PC-3 (cell line): ENCODE measurements at regions of chr22 and their contacts with region 1.

Region 1: DNA sequence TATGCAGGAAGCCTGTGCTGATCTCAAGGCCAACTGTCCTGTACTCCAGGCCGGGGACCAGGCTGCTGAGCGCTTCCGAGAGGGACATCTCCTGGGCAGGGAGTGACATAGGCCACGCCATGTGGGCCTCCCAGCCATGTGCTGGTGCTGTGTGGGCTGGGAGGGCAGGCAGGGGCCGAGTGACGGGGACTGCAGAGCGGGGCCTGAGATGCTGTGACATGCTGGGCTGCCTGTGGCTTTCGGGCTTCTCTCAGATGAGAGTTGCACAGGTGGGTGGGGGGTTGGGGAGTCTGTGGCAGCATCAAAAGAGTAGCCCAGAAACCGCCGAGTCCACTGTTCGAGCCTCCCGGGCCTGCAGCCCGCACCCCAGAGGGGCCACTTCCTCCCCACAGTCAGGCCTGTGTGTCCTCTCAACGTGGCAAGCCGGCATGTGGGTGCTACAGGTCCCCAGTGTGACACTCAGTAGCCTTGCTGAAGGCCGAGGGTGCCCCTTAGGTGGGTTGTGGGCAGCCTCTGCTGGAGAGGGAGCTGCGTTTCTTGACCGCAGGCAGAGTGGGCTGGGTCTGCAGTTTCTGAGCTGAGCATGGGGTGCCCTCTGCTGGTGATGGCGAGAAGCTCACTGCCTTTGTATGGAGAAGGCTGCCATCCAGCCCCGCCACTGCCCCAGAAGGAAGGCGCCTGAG is 101.2 kb downstream of the BCR start:
- DNase-seq: peak; percentile 76
- ATAC-seq: peak; percentile 70
- H3K4me3 ChIP-seq: peak overlapping the region; percentile 54; the same call in 1 of the 2 replicates
- H3K27ac ChIP-seq: peak overlapping the region; percentile 81
- H3K4me1 ChIP-seq: peaks cover 22% of the 10 kb centered on the region
- H3K27me3 ChIP-seq: no peaks in the 10 kb centered on the region
- CTCF ChIP-seq: peak; percentile 82

Region 2: GRCh38 chr22:23225724-23226496 is 55.6 kb before region 1 on chr22:
- CTCF ChIA-PET with region 1: interaction called, 3 read pairs
- POLR2A ChIA-PET with region 1: no interaction called
- intact Hi-C with region 1: loop called (anchors 1 kb)
- DNase-seq: peak; percentile 82
- ATAC-seq: peak; percentile 95
- H3K4me3 ChIP-seq: peak overlapping the region; percentile 33
- H3K27ac ChIP-seq: peak overlapping the region; percentile 95
- H3K4me1 ChIP-seq: peaks cover 35% of the 10 kb centered on the region
- H3K27me3 ChIP-seq: no peaks in the 10 kb centered on the region
- CTCF ChIP-seq: no peak

Region 3: GRCh38 chr22:23240639-23241389 is 40.7 kb before region 1 on chr22:
- CTCF ChIA-PET with region 1: interaction called, 3 read pairs
- POLR2A ChIA-PET with region 1: no interaction called
- intact Hi-C with region 1: loop called (anchors 5 kb)
- DNase-seq: peak; percentile 44
- ATAC-seq: peak; percentile 76
- H3K4me3 ChIP-seq: no peak overlapping the region
- H3K27ac ChIP-seq: no peak overlapping the region
- H3K4me1 ChIP-seq: no peaks in the 10 kb centered on the region
- H3K27me3 ChIP-seq: no peaks in the 10 kb centered on the region
- CTCF ChIP-seq: peak; percentile 65